Ovary (tissue), 10 donors: ENCODE measurements at regions of chr3 and their contacts with region 1.

Region 1: DNA sequence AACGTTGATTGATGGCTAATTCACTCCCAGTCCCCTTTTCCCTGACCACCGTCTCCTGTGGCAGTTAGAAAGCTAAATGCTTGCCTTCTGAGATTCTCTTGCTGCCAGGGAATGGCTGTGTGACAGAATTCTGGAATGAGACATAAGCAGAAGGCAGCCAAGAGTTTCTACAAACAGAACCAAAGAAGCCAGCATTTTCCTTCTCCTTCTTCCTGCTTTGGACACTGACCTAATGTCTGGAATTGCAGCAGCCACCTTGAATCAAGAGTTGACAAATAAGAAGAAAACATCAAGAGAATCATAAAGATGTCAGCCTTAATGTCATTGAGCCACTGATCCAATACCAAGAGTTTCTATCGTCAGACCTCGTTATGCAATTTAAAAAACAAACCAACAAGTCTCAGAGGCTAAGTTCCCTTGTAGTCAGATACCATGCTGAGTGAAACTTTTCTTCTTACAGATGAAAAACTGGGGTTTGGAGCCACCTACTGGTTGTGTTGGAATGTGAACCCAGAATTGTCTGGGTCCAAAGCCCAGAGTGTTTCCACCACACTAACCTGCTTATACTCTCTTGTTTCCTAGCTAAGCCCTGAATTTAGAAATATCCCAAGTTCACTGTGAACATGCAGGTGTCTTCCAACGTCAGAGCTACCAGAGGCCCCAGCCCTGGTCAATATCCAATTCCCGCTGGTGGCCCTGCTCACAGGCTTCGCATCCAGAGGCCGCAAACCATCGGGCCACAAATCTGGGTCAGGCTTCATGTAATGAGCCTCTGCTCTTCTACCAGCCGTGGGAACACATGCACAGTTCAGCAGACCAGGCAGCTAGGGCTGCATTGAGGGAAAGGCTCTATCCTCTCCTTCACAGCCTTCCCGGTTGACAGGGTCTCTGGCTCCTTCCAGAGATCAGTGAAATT is 42.5 kb downstream of the MCF2L2 start:
- DNase-seq: peak in 4 of 5 donors; percentile 26 to 64 (median 31)
- H3K4me3 ChIP-seq: no peak overlapping the region
- H3K27ac ChIP-seq: no peak overlapping the region
- H3K4me1 ChIP-seq: no peaks in the 10 kb centered on the region
- H3K27me3 ChIP-seq: no peaks in the 10 kb centered on the region
- CTCF ChIP-seq: peak; percentile 28 to 56 (median 44)
- EP300 ChIP-seq: no peak
- POLR2A ChIP-seq: no peak

Region 2: GRCh38 chr3:183178629-183179549 is 207.1 kb before region 1 on chr3:
- intact Hi-C with region 1: loop called (anchors 5 kb)
- DNase-seq: peak; percentile 28 to 62 (median 40)
- H3K4me3 ChIP-seq: peak overlapping the region; percentile 39
- H3K27ac ChIP-seq: no peak overlapping the region
- H3K4me1 ChIP-seq: no peaks in the 10 kb centered on the region
- H3K27me3 ChIP-seq: no peaks in the 10 kb centered on the region
- CTCF ChIP-seq: no peak
- EP300 ChIP-seq: no peak
- POLR2A ChIP-seq: no peak